ENCODE measurements at regions of chr3 and their contacts with region 1.

Region 1: DNA sequence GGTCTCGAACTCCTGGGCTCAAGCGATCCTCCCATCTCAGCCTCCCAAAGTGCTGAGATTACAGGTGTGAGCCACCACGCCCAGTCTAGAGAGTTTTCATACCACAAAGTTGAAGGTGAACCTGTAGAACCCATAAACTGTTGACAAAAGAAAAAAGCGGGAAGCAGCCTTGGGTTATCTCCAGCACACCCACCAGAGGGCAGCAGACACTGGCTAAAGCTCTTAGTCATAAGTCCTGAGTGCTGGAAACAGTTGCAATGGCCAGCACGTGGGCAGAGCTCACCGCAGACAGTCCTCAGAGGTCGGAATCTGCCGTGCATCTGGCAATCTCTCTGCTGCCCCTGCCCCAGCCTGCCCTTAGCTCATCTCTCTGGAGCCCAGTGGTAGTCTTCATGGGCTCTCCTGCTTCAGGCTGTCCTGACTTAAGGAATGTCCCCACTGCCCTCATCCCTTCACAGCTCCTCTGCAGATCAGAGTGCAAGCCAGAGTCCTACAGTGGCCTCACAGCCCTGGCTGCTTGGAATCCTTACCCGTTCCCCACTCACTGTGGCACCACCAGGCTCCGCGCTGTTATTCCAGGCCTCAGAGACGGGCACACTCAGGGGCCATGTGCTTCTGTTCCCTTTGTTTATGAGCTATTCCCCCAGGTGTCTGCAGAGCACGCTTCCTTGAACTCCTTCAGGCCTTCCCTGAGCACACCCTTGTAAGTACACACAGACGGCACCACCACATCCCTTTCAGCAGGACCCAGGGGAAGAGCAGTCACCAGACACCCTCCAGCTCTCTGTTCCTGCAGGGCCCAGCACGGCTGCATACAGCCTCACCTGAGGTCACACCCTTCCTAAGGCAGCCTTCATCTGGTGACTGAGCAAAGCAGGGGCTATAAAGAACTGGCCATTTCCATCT is 8.8 kb upstream of the ELP6 start:
- H3K4me3 ChIP-seq: no peak overlapping the region
- H3K27ac ChIP-seq: no peak overlapping the region
- H3K4me1 ChIP-seq: no peaks in the 10 kb centered on the region
- CTCF ChIP-seq: peak; percentile 75

Region 2: GRCh38 chr3:47791193-47791855 is 269.0 kb after region 1 on chr3:
- CTCF ChIA-PET with region 1: interaction called, 27 read pairs
- POLR2A ChIA-PET with region 1: interaction called, 3 read pairs
- H3K4me3 ChIP-seq: no peak overlapping the region
- H3K27ac ChIP-seq: no peak overlapping the region
- H3K4me1 ChIP-seq: no peaks in the 10 kb centered on the region
- CTCF ChIP-seq: no peak

Region 3: GRCh38 chr3:47824541-47825473 is 302.5 kb after region 1 on chr3:
- CTCF ChIA-PET with region 1: interaction called, 13 read pairs
- POLR2A ChIA-PET with region 1: interaction called, 4 read pairs
- H3K4me3 ChIP-seq: peak overlapping the region; percentile 83
- H3K27ac ChIP-seq: peak overlapping the region; percentile 80
- H3K4me1 ChIP-seq: no peaks in the 10 kb centered on the region
- CTCF ChIP-seq: peak; percentile 75

Region 4: GRCh38 chr3:48151058-48151806 is 628.9 kb after region 1 on chr3:
- CTCF ChIA-PET with region 1: interaction called, 14 read pairs
- POLR2A ChIA-PET with region 1: no interaction called
- H3K4me3 ChIP-seq: no peak overlapping the region
- H3K27ac ChIP-seq: no peak overlapping the region
- H3K4me1 ChIP-seq: no peaks in the 10 kb centered on the region
- CTCF ChIP-seq: peak; percentile 79